MCF 10A (cell line): ENCODE measurements at regions of chr12 and their contacts with region 1.

Region 1: GRCh38 chr12:111529424-111530368 is 69.4 kb downstream of the ATXN2 start:
- DNase-seq: peak; percentile 71
- H3K4me3 Mint-ChIP-seq: no peak overlapping the region
- H3K27ac Mint-ChIP-seq: no peak overlapping the region
- H3K4me1 Mint-ChIP-seq: no peaks in the 10 kb centered on the region
- H3K27me3 Mint-ChIP-seq: no peaks in the 10 kb centered on the region
- CTCF ChIP-seq: peak; percentile 55

Region 2: DNA sequence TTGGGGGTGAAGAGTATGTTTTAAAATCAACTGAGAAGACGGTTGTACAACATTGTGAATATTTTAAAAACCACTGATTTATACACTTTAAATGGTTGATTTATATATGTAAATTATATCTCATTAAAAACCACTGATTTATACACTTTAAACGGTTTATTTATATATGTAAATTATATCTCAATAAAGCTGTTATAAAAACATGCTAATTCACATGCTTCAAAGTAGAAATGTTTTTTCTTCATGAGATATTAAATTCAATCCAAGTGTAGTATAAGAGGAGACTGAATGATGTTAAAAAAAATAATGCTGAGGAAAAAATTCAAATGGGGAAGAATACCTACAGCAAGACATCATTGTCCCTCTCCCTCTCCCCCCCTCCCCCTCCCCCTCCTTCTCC is 23.4 kb before region 1 on chr12:
- CTCF ChIA-PET with region 1: interaction called, 10 read pairs
- POLR2A ChIA-PET with region 1: no interaction called
- intact Hi-C with region 1: no loop called
- DNase-seq: no peak
- H3K4me3 Mint-ChIP-seq: no peak overlapping the region
- H3K27ac Mint-ChIP-seq: no peak overlapping the region
- H3K4me1 Mint-ChIP-seq: no peaks in the 10 kb centered on the region
- H3K27me3 Mint-ChIP-seq: no peaks in the 10 kb centered on the region
- CTCF ChIP-seq: no peak

Region 3: DNA sequence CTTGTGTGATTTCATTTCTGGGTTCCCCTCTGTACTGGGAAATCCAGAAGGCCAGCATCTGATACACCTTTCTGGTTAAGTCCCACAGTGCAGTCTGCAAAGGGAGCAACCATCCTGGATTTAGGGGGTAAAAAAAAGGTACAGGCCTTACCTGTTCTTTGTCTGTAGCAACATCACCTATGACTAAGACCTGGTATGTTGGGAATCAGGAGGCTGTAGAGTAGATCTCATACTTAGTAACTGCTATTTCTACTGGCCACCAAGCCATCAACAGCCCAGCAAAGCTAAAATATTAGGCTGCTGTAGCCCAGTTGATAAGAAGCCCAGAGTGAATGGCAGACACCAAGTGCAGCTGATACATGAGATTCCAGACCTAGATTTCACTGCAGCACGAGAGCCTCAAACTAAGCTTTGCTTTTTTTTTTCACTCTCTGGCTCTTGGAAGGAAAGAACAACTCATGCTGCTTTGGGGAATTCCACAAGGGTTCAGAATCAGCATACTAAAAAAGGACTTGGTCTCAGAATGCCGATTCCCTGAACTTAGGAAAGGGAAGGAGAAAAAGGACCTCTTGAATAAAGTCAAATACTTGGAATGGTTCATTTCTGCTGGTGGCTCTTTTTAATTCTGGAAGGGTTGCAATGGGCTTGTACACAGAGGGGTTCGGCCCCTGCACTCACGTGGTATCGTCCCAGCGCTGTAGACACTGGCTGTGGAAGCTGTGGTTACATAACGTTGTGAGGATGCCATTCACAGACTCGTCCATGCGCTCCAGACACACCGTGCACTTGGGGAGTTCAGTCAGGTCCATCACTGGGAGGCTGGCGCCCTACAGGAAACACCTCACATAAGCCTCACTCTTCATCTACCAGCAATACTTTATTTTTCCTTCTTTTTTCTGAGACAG is 135.5 kb after region 1 on chr12:
- CTCF ChIA-PET with region 1: interaction called, 3 read pairs
- POLR2A ChIA-PET with region 1: no interaction called
- intact Hi-C with region 1: loop called (anchors 10 kb)
- DNase-seq: no peak
- H3K4me3 Mint-ChIP-seq: no peak overlapping the region
- H3K27ac Mint-ChIP-seq: no peak overlapping the region
- H3K4me1 Mint-ChIP-seq: no peaks in the 10 kb centered on the region
- H3K27me3 Mint-ChIP-seq: no peaks in the 10 kb centered on the region
- CTCF ChIP-seq: no peak